T-cell (primary cell): ENCODE measurements at regions of chr10 and their contacts with region 1.

Region 1: DNA sequence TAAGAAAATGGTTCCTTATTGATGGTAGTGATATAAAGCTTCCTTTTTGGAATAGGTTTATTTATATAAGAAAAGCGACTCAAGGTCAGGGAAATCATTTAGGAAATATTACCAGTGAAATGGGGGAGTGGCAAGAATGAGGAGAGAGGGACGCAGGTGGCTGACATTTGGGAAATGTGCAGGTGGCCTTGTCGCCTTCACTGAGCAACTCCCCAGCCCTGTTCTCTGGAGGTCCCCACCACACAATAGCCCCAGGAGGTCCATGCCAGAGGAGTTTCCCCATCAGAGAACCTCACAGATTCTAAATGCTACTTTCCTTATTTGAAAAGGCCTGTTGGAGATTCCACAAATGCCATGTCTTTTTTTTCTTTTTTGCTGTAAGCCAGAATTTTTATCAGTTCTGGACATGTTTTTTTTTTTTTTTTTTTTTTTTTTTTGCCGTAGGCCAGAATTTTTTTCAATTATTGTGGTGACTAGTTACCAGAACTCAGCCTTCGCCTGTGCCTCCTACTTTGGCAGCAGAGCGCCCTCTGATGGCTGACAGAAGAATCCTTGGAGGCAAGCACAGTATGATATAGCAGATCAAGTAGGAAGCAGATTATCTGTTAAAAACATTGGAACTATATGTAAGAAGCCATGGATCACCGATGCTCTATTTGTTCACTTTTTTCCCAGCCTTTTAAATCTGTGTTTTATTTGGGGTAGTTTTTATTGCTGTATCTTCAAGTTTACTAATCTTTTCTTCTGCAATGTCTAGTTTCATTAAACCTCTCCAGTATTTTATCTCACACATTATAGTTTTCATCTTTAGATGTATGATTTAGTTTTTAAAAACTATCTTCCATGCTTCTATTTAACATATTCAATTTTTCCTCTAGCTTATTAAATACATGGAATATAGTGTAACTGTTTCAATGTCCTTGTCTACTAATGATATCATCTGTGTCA is 18.6 kb downstream of the OPALIN start:
- DNase-seq: peak in 33 of 35 experiments; percentile 8 to 75 (median 50)
- ATAC-seq: peak in 3 of 4 experiments; percentile 70 to 84 (median 75)
- H3K4me3 ChIP-seq: no peak overlapping the region
- H3K4me3 Mint-ChIP-seq: no peak overlapping the region
- H3K27ac ChIP-seq: no peak overlapping the region
- H3K27ac Mint-ChIP-seq: no peak overlapping the region
- H3K4me1 ChIP-seq: no peaks in the 10 kb centered on the region
- H3K4me1 Mint-ChIP-seq: peaks cover 0 to 3% (median 2%) of the 10 kb centered on the region in 3 donors
- H3K27me3 ChIP-seq: peaks cover 0 to 3% of the 10 kb centered on the region in 2 experiments
- H3K27me3 Mint-ChIP-seq: peaks cover 2 to 8% of the 10 kb centered on the region in 2 donors

Region 2: GRCh38 chr10:96017191-96017687 is 323.0 kb before region 1 on chr10:
- CTCF ChIA-PET with region 1: interaction called, 9 to 14 read pairs
- POLR2A ChIA-PET with region 1: no interaction called
- DNase-seq: peak in 19 of 35 experiments; percentile 1 to 73 (median 17)
- ATAC-seq: peak; percentile 81 to 85 (median 84)
- H3K4me3 ChIP-seq: no peak overlapping the region
- H3K4me3 Mint-ChIP-seq: no peak overlapping the region
- H3K27ac ChIP-seq: no peak overlapping the region
- H3K27ac Mint-ChIP-seq: no peak overlapping the region
- H3K4me1 ChIP-seq: peaks cover 0 to 3% of the 10 kb centered on the region in 2 experiments
- H3K4me1 Mint-ChIP-seq: peaks cover 0 to 1% (median 0%) of the 10 kb centered on the region in 3 donors
- H3K27me3 ChIP-seq: no peaks in the 10 kb centered on the region
- H3K27me3 Mint-ChIP-seq: peaks cover 7 to 8% of the 10 kb centered on the region in 2 donors

Region 3: DNA sequence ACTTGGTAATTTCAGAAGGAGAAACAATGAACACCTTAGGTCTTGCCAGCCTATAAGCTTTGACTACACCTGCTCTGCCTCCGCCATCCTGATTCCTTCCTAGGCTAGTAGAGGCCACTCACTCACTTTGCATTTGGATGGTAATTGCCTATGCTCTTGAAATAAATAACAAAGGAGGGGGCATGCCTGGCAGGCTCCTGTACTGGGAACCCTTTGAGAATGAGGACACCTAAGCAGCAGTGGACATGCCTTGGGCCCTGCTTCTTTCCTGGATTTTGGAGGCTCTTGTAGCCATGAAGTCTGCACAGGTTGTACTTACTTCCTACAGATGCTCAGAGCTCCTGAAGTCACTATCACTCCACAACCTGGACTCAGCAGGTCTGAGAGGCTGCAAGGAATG is 134.7 kb before region 1 on chr10:
- CTCF ChIA-PET with region 1: no interaction called
- POLR2A ChIA-PET with region 1: no interaction called
- DNase-seq: no peak
- ATAC-seq: no peak
- H3K4me3 ChIP-seq: no peak overlapping the region
- H3K4me3 Mint-ChIP-seq: no peak overlapping the region
- H3K27ac ChIP-seq: no peak overlapping the region
- H3K27ac Mint-ChIP-seq: no peak overlapping the region
- H3K4me1 ChIP-seq: no peaks in the 10 kb centered on the region
- H3K4me1 Mint-ChIP-seq: no peaks in the 10 kb centered on the region
- H3K27me3 ChIP-seq: peaks cover 0 to 6% of the 10 kb centered on the region in 2 experiments
- H3K27me3 Mint-ChIP-seq: peaks cover 0 to 2% of the 10 kb centered on the region in 2 donors